Mammary epithelial cell (primary cell): ENCODE measurements at regions of chr10 and their contacts with region 1.

Region 1: DNA sequence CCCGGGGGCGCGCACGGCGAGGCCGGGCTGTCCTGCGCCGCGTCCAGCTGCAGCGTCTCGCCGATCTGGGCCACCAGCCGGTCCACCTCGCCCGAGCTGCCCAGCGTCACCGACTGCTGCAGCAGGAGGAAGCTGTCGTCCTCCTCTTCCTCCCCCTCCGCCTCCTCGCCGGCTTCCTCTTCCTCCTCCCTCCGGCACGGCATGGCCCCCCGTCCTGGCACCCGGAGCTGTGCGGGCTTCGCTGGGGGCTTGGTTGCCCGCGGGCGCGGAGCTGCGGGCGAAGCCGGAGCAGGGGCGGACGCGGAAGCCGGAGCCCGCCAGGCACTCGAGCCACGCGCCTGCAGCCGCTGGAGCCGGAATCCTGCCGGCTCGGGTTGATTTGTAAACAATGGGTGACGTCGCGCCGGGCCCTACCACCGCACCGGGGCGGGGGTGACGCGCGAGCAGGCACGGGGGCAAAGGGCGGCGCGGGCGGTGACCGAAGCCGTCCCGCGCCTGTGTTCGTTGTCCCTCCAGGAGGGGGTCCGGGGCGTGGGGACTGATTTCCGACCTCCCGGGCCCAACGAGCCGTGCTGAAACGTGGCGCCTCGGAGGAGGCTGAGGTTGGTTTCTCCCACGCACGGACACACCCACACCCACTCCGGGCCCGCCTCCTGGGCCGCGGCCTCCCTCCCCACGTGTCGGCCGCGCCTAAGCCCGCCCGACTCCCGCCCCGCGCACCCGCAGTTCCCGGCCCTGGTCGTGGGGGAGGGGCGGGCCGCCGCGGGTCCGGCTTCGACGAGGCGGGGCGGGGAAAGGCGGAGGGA is at the start of gene FRAT2:
- DNase-seq: peak; percentile 86
- H3K4me3 ChIP-seq: peak within 1 kb of the TSS; percentile 66 to 82 (median 78)
- H3K27ac ChIP-seq: peak within 1 kb of the TSS; percentile 94
- H3K4me1 ChIP-seq: peaks cover 20% of the 10 kb centered on the region
- H3K27me3 ChIP-seq: no peaks in the 10 kb centered on the region
- CTCF ChIP-seq: no peak
- total RNA-seq, gene FRAT2: 5.0 to 5.3 TPM

Region 2: GRCh38 chr10:97117372-97117771 is 217.2 kb before region 1 on chr10:
- CTCF ChIA-PET with region 1: no interaction called
- dilution Hi-C with region 1: no loop called
- in situ Hi-C with region 1: no loop called
- intact Hi-C with region 1: no loop called
- DNase-seq: peak; percentile 10
- H3K4me3 ChIP-seq: no peak overlapping the region
- H3K27ac ChIP-seq: no peak overlapping the region
- H3K4me1 ChIP-seq: no peaks in the 10 kb centered on the region
- H3K27me3 ChIP-seq: peaks cover 5% of the 10 kb centered on the region
- CTCF ChIP-seq: peak; percentile 28 to 43

Region 3: DNA sequence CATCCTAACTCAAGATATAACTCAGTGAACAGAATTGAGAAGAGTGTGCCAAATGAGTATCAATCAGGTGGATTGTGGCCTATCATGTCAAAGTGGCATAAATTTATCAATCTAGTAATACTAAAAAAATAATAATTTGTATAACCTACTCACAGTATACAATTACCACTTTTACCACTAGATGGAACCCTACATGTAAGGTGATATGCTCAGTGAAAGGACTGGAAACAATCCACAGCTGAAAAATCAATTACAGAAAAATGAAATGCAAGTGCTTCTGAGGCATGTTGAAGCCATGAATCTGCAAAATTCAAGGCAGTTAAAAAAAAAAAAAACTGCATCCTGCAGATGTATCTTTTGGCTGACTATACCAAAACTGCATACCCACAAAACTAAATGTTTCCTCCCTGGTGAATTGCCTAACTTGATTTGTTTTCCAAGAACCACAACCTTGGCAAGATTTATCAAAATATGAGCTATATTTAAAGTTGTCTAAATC is 56.0 kb before region 1 on chr10:
- CTCF ChIA-PET with region 1: interaction called, 8 read pairs
- dilution Hi-C with region 1: no loop called
- in situ Hi-C with region 1: no loop called
- intact Hi-C with region 1: loop called (anchors 2 kb)
- DNase-seq: peak; percentile 36
- H3K4me3 ChIP-seq: no peak overlapping the region
- H3K27ac ChIP-seq: no peak overlapping the region
- H3K4me1 ChIP-seq: no peaks in the 10 kb centered on the region
- H3K27me3 ChIP-seq: no peaks in the 10 kb centered on the region
- CTCF ChIP-seq: peak; percentile 49 to 58

Region 4: DNA sequence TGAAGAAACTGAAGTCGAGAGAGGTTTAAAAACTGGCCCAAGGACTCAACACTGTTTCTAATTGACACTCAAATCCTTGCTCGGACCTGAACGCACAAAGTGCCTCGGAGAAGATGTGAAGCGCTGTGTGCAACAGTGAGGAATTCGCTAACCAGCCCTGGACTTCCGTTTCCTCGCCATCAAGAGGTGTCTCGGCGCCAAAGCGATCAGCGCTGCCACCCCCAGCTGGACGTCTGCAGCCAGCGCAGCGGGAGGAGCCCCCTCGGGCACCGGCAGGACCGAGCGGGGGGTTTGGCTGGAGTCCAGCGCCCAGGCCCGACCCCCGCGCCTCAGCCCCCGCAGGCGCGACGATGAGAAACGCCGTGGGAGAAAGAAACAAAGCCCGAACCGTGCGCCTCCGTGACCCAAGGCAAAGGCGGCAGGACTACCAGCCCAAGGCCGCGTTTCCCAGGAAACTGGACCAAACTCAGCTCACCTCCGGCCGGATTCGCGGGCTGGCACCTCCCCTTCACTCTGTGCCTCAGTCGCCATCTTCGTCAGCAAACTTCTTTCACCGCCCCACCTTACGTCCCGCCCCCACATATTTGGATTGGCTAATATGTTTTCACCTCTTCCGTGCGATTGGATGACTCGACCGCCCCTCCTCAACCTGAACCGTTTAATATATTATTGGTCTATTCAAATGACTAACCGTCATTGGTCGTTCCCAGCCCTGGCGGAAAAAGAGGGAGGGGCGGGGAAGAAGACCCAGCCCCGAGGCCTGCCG is 42.3 kb before region 1 on chr10 and contains the start of gene ARHGAP19:
- CTCF ChIA-PET with region 1: interaction called, 4 read pairs
- dilution Hi-C with region 1: no loop called
- in situ Hi-C with region 1: no loop called
- intact Hi-C with region 1: loop called (anchors 1 kb)
- DNase-seq: peak; percentile 99
- H3K4me3 ChIP-seq: peak within 1 kb of the TSS; percentile 77 to 95 (median 90)
- H3K27ac ChIP-seq: peak within 1 kb of the TSS; percentile 93
- H3K4me1 ChIP-seq: peaks cover 10% of the 10 kb centered on the region
- H3K27me3 ChIP-seq: no peaks in the 10 kb centered on the region
- CTCF ChIP-seq: peak; percentile 26 to 42
- total RNA-seq, gene ARHGAP19: 10.8 to 20.5 TPM

Region 5: GRCh38 chr10:97318772-97319651 is 15.6 kb before region 1 on chr10 and contains the start of gene FRAT1:
- CTCF ChIA-PET with region 1: no interaction called
- dilution Hi-C with region 1: no loop called
- in situ Hi-C with region 1: no loop called
- intact Hi-C with region 1: loop called (anchors 2 kb)
- DNase-seq: peak; percentile 89
- H3K4me3 ChIP-seq: peak within 1 kb of the TSS; percentile 78 to 92 (median 83)
- H3K27ac ChIP-seq: peak within 1 kb of the TSS; percentile 98
- H3K4me1 ChIP-seq: peaks cover 13% of the 10 kb centered on the region
- H3K27me3 ChIP-seq: peaks cover 2% of the 10 kb centered on the region
- CTCF ChIP-seq: no peak
- total RNA-seq, gene FRAT1: 1.5 to 2.4 TPM